Heart left ventricle (tissue), 16 donors: ENCODE measurements at regions of chr9 and their contacts with region 1.

Region 1: DNA sequence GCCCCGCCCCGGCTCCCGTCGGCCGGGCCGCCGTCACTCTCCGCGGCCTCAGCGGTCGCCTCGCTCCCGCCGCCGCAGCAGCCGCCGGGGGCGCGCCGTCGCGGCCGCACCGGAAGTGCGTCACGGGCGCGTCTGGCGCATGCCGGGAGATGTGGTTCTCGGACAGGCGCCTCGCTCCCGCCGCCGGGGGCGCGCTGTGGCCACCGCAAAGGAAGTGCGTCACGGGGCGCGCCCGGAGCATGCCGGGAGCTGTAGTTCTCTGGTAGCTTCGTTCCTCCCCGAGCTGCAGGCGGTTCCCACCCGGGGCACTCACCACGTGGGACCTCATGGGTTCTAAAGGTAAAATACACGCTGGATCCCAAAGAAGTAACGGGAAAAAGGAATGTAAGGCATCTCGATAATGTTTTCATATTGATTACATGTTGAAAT is at the start of gene UBAC1:
- DNase-seq: peak; percentile 96 to 98 (median 97)
- ATAC-seq: peak; percentile 89 to 93 (median 92)
- H3K4me3 ChIP-seq: peak within 1 kb of the TSS; percentile 44 to 100 (median 89)
- H3K27ac ChIP-seq: peak within 1 kb of the TSS; percentile 82 to 99 (median 94)
- H3K4me1 ChIP-seq: peaks cover 2 to 47% (median 33%) of the 10 kb centered on the region in 12 donors
- H3K27me3 ChIP-seq: no peaks in the 10 kb centered on the region
- CTCF ChIP-seq: peak; percentile 30 to 68 (median 42)
- POLR2A ChIP-seq: peak in 1 of 2 donors; percentile 46
- total RNA-seq, gene UBAC1: 71.1 to 115 (median 87.6) TPM

Region 2: DNA sequence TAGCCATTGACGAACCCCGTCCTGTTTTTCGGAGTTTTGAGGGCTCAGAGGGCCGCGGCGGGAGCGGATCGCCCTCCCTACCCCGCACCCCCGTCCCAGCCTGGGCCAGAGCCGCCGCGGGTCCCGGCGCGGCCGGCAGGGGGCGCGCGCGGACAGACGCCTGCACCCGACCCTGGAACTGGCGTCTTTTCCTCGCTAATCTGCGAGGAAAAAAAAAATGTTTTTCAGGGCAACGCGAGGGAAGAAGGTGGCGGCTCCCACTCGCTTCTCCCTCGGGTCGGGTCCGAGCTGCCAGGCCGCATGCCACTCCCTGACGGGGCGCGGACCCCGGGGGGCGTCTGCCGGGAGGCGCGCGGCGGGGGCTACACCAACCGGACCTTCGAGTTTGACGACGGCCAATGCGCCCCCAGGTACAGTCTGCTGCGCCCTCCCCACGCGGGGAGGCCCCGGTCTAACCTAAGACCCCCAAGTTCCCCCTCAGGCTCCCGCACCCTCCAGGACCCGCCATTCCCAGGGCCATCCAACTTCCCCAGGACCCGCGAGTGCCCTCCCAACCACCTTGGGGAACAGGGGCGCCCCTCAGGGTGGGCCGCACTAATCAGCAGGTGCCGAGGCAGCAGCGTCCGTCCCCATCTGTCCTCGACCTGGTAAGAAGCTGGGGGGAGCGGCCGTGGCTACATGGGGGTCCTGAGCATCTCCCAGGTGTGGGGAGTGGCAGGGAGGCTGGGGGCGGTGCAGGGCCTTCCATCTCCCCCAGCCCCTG is 259.2 kb before region 1 on chr9 and contains the start of gene KCNT1:
- intact Hi-C with region 1: loop called in 3 of 10 experiments (anchors 5 to 10 kb)
- DNase-seq: peak in 2 of 5 donors; percentile 31 to 42
- ATAC-seq: peak in 2 of 4 donors; percentile 37 to 63
- H3K4me3 ChIP-seq: peak within 1 kb of the TSS in 7 of 12 donors; percentile 10 to 37 (median 21)
- H3K27ac ChIP-seq: no peak within 1 kb of the TSS
- H3K4me1 ChIP-seq: peaks cover 0 to 30% (median 10%) of the 10 kb centered on the region in 12 donors
- H3K27me3 ChIP-seq: peaks cover 0 to 45% (median 18%) of the 10 kb centered on the region in 9 donors
- CTCF ChIP-seq: peak; percentile 75 to 98 (median 90)
- POLR2A ChIP-seq: no peak
- total RNA-seq, gene KCNT1: 0.50 to 7.4 (median 2.6) TPM

Region 3: GRCh38 chr9:135864447-135865049 is 96.7 kb before region 1 on chr9:
- intact Hi-C with region 1: loop called in 5 of 10 experiments (anchors 1 to 10 kb)
- DNase-seq: peak; percentile 41 to 74 (median 53)
- ATAC-seq: peak in 3 of 4 donors; percentile 42 to 52 (median 50)
- H3K4me3 ChIP-seq: no peak overlapping the region
- H3K27ac ChIP-seq: no peak overlapping the region
- H3K4me1 ChIP-seq: peaks cover 0 to 10% (median 3%) of the 10 kb centered on the region in 12 donors
- H3K27me3 ChIP-seq: no peaks in the 10 kb centered on the region
- CTCF ChIP-seq: peak; percentile 77 to 90 (median 82)
- POLR2A ChIP-seq: no peak

Region 4: GRCh38 chr9:135907431-135908092 is 53.7 kb before region 1 on chr9 and contains the start of gene CAMSAP1:
- intact Hi-C with region 1: loop called in 5 of 10 experiments (anchors 1 to 5 kb)
- DNase-seq: peak; percentile 94 to 98 (median 95)
- ATAC-seq: peak; percentile 91 to 98 (median 98)
- H3K4me3 ChIP-seq: peak within 1 kb of the TSS; percentile 61 to 95 (median 79)
- H3K27ac ChIP-seq: peak within 1 kb of the TSS in 11 of 12 donors; percentile 76 to 94 (median 88)
- H3K4me1 ChIP-seq: peaks cover 0 to 55% (median 37%) of the 10 kb centered on the region in 12 donors
- H3K27me3 ChIP-seq: no peaks in the 10 kb centered on the region
- CTCF ChIP-seq: no peak
- POLR2A ChIP-seq: peak in 1 of 2 donors; percentile 83
- total RNA-seq, gene CAMSAP1: 15.6 to 38.3 (median 22.5) TPM

Region 5: DNA sequence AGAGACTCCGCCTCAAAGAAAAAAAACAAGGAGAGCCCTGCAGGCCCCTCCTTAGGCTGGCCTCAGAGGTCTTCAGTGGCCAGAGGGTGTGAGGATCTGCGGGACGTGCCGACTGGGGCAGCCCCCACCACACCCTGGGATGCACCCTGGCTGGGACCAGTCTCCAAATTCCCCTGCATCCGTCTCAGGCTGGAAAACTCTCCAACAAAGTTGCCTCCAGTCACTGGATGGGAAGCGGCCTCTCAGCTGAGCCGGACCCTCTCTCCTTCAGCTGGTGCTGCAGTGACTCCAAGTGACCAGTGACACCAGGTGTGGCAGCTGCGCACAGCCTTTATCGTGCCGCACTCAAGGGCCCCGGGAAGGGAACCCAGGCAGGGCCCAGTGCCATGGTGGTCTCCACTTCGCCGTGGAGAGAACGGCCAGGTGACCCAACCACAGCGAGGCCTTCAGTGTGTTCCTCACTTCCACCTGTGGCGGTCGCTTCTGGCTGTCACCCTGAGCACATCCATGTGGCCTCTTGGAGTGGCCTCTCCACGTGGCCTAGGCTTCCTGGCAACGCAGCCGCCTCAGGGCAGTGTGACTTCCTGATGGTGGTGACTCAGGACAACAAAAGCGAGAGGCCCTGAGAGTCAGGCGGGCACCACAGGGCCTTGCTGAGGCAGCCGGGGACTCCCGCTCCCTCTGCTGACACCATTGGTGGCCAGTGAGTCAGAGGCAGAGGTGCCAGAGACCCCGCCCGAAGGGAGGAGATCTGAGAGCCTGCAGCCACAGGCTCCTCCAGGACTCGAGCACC is 34.7 kb before region 1 on chr9:
- intact Hi-C with region 1: no loop called
- DNase-seq: peak in 4 of 5 donors; percentile 29 to 78 (median 59)
- ATAC-seq: peak; percentile 55 to 81 (median 69)
- H3K4me3 ChIP-seq: no peak overlapping the region
- H3K27ac ChIP-seq: peak overlapping the region in 1 of 12 donors; percentile 49
- H3K4me1 ChIP-seq: peaks cover 0 to 29% (median 2%) of the 10 kb centered on the region in 12 donors
- H3K27me3 ChIP-seq: no peaks in the 10 kb centered on the region
- CTCF ChIP-seq: no peak
- POLR2A ChIP-seq: no peak

Region 6: DNA sequence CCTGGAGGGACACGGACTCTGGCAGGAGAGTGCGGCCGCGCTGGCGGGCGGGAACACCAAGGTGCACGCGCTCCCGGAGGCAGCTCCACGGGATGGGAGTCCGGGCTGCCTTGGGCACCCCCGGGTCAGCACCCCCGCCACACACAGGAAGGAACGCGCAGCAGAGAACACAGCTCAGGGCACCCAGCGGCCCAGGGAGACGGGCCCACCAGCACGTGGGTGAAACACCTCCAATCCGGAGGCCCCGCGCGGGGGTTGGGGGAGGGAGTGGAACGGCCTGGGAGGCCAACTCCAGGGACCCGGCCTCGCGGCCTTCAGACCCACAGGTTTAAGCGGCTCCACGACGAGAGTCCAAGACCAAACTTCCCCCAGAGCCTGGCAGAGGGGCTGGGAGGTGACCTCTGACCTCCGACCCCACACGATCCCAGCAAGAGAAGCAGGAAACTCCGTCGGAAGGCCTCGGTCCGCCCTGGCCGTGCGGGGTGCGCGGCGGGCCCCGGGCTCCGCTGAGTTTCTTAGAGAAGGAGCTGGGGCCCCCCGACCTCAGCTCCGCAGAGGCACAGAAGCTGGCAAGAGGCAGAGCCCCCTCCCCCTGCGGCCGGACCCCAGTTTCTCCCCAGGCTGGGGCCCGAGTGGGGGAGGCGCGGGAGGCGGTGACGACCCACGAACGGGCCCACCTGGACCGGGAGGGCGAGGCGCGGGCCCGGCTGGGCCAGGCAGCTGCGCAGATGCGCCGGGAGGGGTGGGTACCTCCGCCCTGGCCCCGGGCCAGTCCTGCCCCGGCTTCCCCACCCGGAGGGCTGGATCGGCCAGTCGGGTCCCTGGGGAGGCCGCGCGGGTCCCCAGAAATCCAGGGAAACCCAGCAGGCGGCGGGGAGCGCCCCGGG is 132.9 kb after region 1 on chr9:
- intact Hi-C with region 1: loop called in 1 of 10 experiments (anchors 10 kb)
- DNase-seq: peak; percentile 85 to 93 (median 91)
- ATAC-seq: peak; percentile 71 to 77 (median 74)
- H3K4me3 ChIP-seq: peak overlapping the region; percentile 71 to 99 (median 89)
- H3K27ac ChIP-seq: peak overlapping the region; percentile 91 to 99 (median 98)
- H3K4me1 ChIP-seq: peaks cover 10 to 71% (median 63%) of the 10 kb centered on the region in 12 donors
- H3K27me3 ChIP-seq: no peaks in the 10 kb centered on the region
- CTCF ChIP-seq: peak in 1 of 12 donors; percentile 23
- POLR2A ChIP-seq: no peak

Region 7: DNA sequence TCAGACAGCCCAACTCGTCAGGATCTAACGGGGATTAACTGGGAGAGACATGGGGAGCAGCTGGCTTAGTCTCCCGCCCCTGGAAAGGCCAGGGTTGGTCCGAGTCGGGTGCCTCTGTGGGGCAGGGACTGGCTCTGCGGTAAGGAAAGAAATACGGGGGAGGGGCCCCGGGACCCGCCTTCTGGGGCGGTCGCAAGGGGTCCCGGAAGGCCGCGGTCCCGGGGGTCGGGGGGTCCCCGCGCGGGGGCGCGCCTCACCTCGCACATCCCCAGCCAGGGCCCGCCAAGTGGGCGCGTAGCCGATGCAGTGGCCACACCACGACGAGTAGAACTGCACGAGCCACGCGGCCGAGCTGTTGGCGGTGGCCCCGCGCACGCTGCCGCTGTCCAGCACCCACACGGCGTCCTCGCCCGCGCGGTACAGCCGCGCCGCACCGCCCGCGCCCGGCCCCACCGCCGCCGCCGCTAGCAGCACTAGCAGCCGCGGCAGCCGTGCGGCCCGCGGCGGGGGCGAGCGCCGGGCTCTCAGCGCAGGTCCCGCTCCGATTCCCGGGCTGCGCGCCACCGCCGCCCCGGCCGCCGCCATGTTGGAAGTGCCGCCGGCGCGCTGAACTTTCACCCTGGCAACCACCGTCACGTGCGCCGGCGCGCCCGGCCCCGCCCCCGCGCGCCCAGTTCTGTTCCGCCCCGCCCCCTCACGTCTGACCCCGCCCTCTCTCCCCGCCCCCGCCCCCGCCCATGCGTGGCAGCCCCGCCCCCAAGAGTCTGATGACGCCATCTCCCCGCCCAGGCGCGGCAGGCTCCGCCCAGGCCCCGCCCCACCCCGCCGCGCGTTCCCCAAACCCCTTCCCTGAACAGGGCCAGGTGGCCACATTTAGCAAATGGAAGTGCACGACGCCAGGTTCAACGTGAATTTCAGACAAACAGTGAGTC is 284.2 kb after region 1 on chr9 and contains the start of gene QSOX2:
- intact Hi-C with region 1: loop called in 2 of 10 experiments (anchors 5 to 10 kb)
- DNase-seq: peak; percentile 81 to 91 (median 89)
- ATAC-seq: peak; percentile 67 to 89 (median 88)
- H3K4me3 ChIP-seq: peak within 1 kb of the TSS; percentile 67 to 95 (median 82)
- H3K27ac ChIP-seq: peak within 1 kb of the TSS in 3 of 12 donors; percentile 30 to 46 (median 33)
- H3K4me1 ChIP-seq: peaks cover 3 to 44% (median 21%) of the 10 kb centered on the region in 12 donors
- H3K27me3 ChIP-seq: no peaks in the 10 kb centered on the region
- CTCF ChIP-seq: no peak
- POLR2A ChIP-seq: no peak
- total RNA-seq, gene QSOX2: 4.8 to 7.8 (median 5.9) TPM

Region 8: GRCh38 chr9:136283291-136284235 is 322.3 kb after region 1 on chr9:
- intact Hi-C with region 1: loop called in 1 of 10 experiments (anchors 10 kb)
- DNase-seq: peak; percentile 75 to 85 (median 80)
- ATAC-seq: peak; percentile 89 to 97 (median 94)
- H3K4me3 ChIP-seq: peak overlapping the region in 10 of 12 donors; percentile 4 to 52 (median 34)
- H3K27ac ChIP-seq: peak overlapping the region in 7 of 12 donors; percentile 36 to 62 (median 54)
- H3K4me1 ChIP-seq: peaks cover 0 to 10% (median 5%) of the 10 kb centered on the region in 12 donors
- H3K27me3 ChIP-seq: peaks cover 0 to 30% (median 11%) of the 10 kb centered on the region in 9 donors
- CTCF ChIP-seq: peak; percentile 77 to 90 (median 82)
- POLR2A ChIP-seq: no peak